Stomach (tissue), 19 donors: ENCODE measurements at regions of chr3 and their contacts with region 1.

Region 1: GRCh38 chr3:197260491-197261163 is 37.8 kb downstream of the DLG1 start:
- DNase-seq: no peak
- H3K4me3 ChIP-seq: no peak overlapping the region
- H3K27ac ChIP-seq: no peak overlapping the region
- H3K4me1 ChIP-seq: peaks cover 0 to 39% (median 19%) of the 10 kb centered on the region in 4 donors
- H3K27me3 ChIP-seq: no peaks in the 10 kb centered on the region
- CTCF ChIP-seq: no peak
- EP300 ChIP-seq: no peak
- POLR2A ChIP-seq: no peak

Region 2: GRCh38 chr3:197151569-197151968 is 109.1 kb before region 1 on chr3:
- intact Hi-C with region 1: no loop called
- DNase-seq: peak; percentile 32 to 57
- H3K4me3 ChIP-seq: no peak overlapping the region
- H3K27ac ChIP-seq: no peak overlapping the region
- H3K4me1 ChIP-seq: peaks cover 0 to 14% (median 6%) of the 10 kb centered on the region in 4 donors
- H3K27me3 ChIP-seq: no peaks in the 10 kb centered on the region
- CTCF ChIP-seq: no peak
- EP300 ChIP-seq: no peak
- POLR2A ChIP-seq: no peak

Region 3: DNA sequence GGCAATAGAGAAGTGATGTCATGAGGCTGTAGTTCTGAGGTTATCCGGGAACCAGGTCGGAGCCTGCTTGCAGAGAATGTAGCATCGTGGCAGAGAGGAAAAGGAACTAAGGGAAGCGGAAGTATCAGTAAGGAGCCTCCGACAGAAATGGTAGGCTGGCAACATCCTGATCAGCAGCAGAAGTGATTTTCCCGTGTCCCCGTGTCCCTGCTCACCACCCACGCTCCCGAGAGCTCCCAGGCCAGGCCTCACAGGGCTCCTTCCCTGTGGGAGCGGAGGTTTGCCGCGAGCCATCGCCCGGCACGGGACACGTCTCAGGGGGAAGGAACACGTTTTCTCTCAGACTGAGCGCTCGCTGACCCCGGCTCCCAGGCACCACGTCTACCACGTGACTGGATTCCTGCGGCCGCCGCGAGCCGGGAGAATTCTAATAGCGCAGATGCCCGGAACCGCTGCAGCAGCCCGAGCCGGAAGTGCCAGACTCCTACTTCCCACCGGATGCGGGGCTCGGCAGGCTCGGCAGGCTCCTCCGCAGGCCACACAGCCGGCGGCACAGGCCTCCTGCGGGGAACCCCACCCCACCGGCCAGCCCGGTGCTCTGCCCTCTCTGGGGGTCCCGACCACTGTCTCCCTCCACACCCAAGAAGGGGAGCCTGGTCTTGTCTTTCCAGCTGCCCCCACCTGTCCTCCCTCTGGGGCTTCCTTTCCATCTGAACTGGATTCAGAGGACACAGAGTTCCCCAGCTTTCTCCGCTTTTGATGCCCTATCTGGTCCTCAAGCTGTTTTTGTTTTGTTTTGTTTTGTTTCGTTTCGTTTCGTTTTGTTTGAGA is 195.8 kb after region 1 on chr3:
- intact Hi-C with region 1: loop called (anchors 10 kb)
- DNase-seq: peak; percentile 86 to 94
- H3K4me3 ChIP-seq: peak overlapping the region; percentile 43 to 62 (median 55)
- H3K27ac ChIP-seq: peak overlapping the region; percentile 60 to 88 (median 81)
- H3K4me1 ChIP-seq: peaks cover 9 to 28% (median 20%) of the 10 kb centered on the region in 4 donors
- H3K27me3 ChIP-seq: no peaks in the 10 kb centered on the region
- CTCF ChIP-seq: no peak
- EP300 ChIP-seq: no peak
- POLR2A ChIP-seq: no peak

Region 4: DNA sequence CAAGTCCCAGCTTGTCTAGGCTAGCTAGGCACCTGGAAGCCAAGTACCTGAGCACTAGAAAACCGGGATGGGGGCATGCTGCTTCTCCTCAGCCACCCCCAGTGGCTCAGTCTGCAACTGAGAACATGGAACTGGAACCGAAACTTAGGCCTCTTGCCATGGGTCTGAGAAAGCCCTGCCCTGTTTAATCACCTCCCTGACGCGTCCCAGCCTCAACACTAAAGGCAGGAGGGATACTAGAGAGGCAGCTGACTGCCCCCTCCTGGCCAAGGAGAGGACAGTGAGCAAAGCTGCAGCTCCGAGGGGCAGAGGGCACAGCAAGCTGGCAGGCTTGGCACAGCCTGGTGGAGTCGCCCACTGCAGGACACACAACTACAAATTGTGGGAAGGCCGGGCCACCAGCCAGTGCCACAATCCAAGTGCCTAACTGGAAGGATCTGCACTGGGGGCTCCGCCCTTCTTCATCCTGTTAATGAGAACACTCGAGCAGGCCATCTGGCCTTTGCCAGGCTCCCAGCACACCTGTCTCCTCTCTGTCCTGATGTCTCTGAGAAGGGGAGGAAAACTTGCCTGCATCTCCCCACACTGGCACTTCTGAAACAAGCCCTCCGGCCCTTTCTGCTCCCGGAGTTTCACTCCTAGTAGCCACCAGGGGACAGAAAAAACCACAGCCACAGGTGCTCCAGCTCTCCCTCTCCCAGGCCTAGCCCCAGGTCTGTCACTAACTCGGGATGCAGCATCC is 241.4 kb after region 1 on chr3:
- intact Hi-C with region 1: loop called (anchors 5 kb)
- DNase-seq: peak; percentile 63 to 69
- H3K4me3 ChIP-seq: no peak overlapping the region
- H3K27ac ChIP-seq: no peak overlapping the region
- H3K4me1 ChIP-seq: peaks cover 4 to 33% (median 22%) of the 10 kb centered on the region in 4 donors
- H3K27me3 ChIP-seq: no peaks in the 10 kb centered on the region
- CTCF ChIP-seq: peak in 4 of 7 experiments; percentile 15 to 49 (median 38)
- EP300 ChIP-seq: no peak
- POLR2A ChIP-seq: no peak